Right ventricle myocardium inferior (tissue), 1 donor: ENCODE measurements at regions of chr2 and their contacts with region 1.

Region 1: DNA sequence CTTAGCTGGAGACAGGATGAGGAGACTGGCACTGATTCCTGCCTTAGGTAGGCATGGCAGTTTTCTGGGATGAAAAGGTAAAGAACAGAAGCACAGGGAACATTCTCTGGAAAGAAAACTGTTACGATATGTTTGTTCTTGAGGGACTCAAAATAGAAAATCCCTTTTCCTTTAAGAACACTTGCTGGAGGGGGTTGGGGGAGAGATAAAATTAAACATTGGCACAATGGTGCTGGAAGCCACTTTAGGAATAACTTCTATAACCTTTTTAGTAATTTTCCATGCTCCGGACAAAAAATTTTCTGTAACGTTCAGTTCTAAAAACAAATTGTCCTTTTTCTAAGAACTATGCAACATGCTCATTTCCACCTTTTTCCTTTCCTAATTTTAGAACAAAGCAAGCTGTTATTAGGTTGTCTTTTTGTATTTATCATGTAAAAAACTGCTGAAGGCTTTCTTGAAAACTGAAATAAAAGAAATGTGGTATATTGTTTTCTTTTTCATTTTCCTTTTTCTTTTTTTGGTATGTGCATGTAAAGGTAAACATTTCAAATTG is 343.8 kb downstream of the EPHA4 start:
- DNase-seq: no peak
- ATAC-seq: no peak

Region 2: DNA sequence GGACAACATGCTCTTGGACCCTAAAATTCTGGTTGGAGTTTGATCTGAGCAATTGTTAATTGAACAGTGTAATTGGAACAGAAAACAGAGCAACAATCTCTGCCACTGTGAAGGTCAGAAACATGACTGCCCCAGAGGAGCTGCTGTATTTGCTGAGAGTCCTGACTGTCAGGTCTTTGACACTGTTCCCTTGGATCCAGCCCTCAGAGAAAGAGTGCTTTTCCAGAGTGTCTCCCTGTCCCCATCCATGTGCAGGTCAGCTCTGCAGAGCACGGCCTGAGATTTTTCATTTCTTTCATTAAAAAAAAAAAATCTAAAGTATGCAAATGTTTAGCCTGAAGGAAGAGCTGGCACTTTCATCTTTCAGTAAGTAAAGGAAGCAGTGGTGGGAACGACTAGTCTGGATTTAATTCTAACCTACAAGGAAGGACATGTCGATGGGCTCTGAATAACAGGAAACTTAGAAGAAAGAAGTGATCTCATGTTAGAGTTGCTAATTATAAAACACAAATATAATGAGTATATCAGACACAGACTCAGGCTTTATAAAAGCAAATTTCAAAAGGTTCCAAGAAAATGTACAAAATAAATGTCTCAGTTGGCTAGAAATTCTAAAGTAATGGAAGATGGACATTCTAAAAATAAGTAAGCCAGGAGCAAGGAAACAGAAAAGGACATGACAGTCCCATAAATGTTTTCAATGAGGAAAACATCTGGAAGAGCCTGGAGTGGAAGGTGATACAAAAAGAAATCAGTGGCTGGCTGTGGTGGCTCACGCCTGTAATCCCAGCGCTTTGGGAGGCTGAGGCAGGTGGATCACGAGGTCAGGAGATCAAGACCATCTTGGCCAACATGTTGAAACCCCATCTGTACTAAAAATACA is 532.7 kb before region 1 on chr2:
- intact Hi-C with region 1: loop called (anchors 10 kb)
- DNase-seq: no peak
- ATAC-seq: no peak

Region 3: DNA sequence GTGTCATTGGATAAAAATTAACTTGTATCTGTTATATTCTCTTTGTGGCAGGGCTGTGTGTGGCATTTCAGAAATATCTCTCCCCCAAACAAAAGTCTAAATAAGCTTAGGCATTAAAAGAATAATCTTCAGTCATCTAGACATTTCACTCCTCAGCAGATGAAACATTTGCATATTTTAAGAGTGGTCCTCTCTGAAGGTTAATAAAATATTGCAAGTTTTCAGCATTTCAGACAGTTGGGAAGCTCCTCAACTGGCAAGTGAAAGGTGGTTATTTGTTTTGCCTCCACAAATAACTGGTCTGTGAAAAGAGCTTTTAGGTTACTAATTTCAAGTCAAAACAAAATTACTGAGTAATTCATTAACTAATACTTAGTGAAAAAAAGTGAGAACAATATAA is 118.7 kb before region 1 on chr2:
- intact Hi-C with region 1: loop called (anchors 5 kb)
- DNase-seq: no peak
- ATAC-seq: no peak

Region 4: DNA sequence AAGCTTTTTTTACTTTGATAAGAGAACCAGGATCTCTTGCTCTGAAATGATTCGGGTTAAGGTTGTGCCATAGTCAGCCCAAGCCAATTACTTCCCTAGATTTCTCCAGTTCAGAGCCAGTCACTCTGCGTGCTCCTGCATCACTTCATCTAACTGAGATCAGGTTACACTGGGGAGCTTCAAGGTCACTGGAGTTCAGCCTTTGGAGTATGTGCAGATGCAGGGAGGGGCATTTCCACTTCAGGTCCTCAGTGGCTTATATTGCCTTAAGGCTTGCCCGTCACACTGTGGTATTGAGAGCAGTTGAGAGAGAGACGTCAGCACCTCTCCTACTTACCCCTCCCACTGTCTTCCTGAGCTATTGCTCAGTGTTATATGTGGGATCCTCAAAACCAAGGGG is 26.0 kb after region 1 on chr2:
- intact Hi-C with region 1: no loop called
- DNase-seq: no peak
- ATAC-seq: no peak

Region 5: DNA sequence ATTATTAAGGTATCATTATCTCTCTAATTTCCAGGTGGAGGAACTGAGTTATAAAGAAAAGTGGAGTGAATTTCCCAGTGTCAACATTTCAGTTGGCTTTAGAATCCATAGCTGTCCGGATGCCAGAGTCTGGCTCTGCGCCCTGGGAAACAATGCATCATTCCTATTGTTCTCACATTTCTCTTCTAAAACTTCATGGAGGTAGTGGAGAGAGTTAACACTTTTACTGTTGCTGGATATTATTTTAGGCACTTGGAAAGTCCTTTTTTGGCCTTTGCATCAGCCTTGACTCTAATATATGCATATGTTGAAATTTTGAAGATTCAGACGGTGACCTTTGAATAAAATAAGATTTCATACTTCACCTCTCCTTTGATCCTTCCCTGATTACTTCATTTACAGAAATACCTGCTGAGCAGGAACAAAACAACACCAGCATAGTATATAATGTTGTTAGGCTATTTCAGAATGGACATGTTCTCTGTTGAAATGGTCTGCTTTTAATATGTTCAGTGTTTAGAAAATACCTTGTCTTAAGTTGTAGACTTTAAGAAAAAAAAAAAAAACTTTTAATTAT is 195.0 kb after region 1 on chr2:
- intact Hi-C with region 1: loop called (anchors 2 kb)
- DNase-seq: no peak
- ATAC-seq: no peak

Region 6: DNA sequence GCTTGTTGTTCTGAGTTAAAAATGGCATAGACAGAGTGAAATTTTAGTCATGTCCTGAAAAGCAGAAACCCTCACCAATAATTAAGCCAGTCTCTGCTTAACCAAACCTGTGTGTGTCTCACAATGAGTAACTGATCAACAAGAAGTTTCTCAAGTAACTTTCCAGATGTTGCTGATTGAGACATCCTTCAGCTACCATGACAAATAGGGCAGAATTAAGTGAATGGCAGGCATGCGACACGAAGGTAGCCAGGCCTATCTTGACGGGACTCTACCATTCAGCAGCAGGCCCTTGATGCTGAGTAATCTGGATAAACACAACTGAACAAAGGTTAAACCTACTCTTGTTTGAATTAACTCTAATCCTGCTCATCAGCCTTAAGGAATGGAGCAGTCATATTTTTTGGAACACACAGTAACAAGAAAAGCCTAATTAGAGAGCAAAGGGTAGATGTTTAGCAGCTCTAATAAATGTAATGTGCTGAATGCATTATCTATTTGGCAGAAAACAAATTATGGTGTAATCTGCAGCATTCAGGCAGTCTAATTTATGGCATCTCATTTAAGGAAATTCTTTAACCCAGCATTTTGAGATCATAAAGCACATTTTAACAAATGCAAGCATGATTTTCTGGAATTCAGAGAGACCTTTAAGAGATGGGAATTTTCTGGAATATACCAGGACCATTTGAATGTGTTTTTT is 503.3 kb after region 1 on chr2:
- intact Hi-C with region 1: no loop called
- DNase-seq: no peak
- ATAC-seq: no peak